Gastrocnemius medialis (tissue), 4 donors: ENCODE measurements at regions of chr6 and their contacts with region 1.

Region 1: DNA sequence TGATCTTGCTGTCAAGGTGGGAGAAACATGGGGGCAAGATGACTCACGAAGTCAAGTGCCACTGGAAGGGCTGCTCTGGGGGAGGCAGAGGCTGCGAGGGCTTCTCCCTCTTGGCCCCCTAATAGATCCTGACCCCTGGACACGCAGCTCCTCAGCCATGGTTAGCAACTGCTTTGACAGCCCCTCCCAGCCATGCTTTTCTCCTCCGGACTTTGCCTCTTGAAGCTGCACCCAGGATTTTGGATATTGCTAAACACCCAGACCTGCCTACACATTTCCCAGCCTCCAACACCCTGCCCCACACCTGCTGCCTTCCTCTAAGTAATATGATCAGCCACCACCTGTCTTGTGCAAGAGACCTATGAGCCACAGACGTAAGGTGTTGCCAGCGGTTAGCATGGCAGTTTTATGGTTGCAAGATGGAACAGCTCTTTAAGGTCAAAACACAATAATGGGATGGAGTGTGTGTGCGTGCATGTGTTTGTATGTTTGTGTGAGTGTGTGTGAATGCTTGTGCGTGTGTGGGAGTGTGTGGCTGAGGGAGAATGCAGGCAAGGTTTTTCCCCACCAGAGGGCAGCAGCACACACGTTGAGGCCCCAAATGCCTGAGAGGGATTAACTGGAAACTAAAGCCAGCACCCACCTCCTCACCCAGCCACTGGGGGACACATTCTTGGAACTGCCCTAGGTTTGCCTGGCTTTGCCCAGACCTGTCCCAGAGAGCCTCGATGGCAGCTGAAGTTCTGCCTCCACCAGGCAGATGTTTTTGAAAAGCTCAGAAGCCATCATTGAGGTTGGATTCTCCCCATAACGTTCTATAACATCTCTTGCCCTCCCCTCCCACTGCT is 2.5 kb downstream of the IP6K3 start:
- DNase-seq: peak; percentile 89 to 96
- ATAC-seq: peak; percentile 28 to 35
- H3K4me3 ChIP-seq: peak overlapping the region; percentile 66 to 88 (median 79)
- H3K27ac ChIP-seq: peak overlapping the region; percentile 98 to 100 (median 100)
- H3K4me1 ChIP-seq: peaks cover 15 to 32% of the 10 kb centered on the region in 2 donors
- H3K27me3 ChIP-seq: no peaks in the 10 kb centered on the region
- CTCF ChIP-seq: peak; percentile 91 to 98 (median 98)
- POLR2A ChIP-seq: peak in 1 of 2 donors; percentile 78

Region 2: GRCh38 chr6:31815025-31815838 is 1929.0 kb before region 1 on chr6 and contains the starts of genes HSPA1A and HSPA1L:
- in situ Hi-C with region 1: no loop called
- intact Hi-C with region 1: loop called (anchors 5 kb)
- DNase-seq: peak; percentile 95 to 97
- ATAC-seq: peak; percentile 61 to 62
- H3K4me3 ChIP-seq: peak within 1 kb of the TSS; percentile 52 to 78 (median 70)
- H3K27ac ChIP-seq: peak within 1 kb of the TSS; percentile 99 to 100 (median 99)
- H3K4me1 ChIP-seq: peaks cover 32 to 35% of the 10 kb centered on the region in 2 donors
- H3K27me3 ChIP-seq: no peaks in the 10 kb centered on the region
- CTCF ChIP-seq: no peak
- POLR2A ChIP-seq: peak; percentile 100
- total RNA-seq, gene HSPA1A: 85.8 to 205 (median 111) TPM
- total RNA-seq, gene HSPA1L: 1.1 to 7.1 (median 3.5) TPM

Region 3: DNA sequence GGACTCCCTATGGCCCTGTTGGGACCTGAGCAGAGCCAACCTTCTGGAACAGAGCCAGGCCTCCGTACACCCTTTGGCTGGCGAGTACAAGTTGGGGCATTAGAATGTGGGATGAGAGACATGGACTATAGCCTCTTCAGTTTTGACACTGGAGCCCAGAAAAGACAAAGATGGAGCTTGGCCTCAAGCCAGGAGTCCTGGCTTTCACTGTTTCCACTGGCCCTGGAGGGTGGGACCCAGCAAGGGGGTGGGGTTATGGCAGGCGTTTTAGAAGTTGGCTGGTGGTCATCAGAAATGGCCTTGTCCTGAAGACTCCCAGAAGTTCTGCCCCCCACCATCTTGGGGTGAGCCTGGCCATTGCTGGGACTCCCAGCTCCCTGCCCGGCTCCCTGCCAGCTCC is 101.3 kb before region 1 on chr6:
- in situ Hi-C with region 1: no loop called
- intact Hi-C with region 1: no loop called
- DNase-seq: no peak
- ATAC-seq: no peak
- H3K4me3 ChIP-seq: no peak overlapping the region
- H3K27ac ChIP-seq: no peak overlapping the region
- H3K4me1 ChIP-seq: no peaks in the 10 kb centered on the region
- H3K27me3 ChIP-seq: no peaks in the 10 kb centered on the region
- CTCF ChIP-seq: no peak
- POLR2A ChIP-seq: no peak

Region 4: DNA sequence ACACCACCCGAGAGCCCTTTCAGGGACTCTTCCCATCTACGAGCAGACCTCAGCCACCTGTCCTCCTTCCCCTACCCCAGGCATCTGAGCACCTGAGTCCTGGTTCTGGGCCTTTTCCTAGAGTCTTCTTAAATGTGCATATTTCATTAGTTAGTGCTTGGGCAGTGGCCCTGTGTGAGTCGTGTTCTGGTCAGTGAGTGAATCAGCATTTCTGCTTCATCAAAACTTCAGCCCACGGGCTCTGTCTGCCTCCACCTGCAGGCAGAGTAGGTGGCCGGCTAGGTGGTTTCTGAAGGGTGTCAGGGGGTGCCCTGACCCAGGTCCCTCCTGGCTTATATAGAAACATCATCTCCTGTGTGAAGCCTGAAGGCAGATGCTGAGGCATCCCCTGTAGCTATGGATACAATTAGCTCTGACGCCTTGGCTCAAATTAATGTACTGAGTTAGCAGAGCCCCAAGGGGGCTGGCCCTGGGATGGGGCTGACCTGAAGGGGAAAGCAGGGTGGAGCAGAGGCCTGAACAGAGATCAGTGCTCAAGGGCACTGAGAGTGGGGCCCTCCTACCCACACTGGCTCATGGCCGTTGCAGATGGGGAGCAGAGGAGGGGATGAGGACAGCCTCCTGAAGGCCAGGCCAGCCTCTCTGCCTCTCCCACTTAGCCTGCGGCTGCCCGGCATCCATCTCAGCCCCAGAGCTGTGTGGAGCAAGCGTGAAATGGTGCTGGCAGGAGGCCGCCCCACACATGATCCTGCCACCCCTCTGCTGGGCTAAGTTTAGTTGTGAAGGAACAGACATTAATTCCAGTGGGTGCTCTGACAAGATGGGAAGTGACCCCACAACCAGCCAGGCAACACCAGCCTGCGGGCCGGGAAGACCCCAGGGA is 11.2 kb before region 1 on chr6:
- in situ Hi-C with region 1: no loop called
- intact Hi-C with region 1: loop called (anchors 1 kb)
- DNase-seq: peak in 1 of 2 donors; percentile 68
- ATAC-seq: no peak
- H3K4me3 ChIP-seq: peak overlapping the region in 1 of 4 donors; percentile 22
- H3K27ac ChIP-seq: peak overlapping the region; percentile 98 to 100 (median 100)
- H3K4me1 ChIP-seq: peaks cover 84 to 89% of the 10 kb centered on the region in 2 donors
- H3K27me3 ChIP-seq: no peaks in the 10 kb centered on the region
- CTCF ChIP-seq: no peak
- POLR2A ChIP-seq: peak in 1 of 2 donors; percentile 9

Region 5: DNA sequence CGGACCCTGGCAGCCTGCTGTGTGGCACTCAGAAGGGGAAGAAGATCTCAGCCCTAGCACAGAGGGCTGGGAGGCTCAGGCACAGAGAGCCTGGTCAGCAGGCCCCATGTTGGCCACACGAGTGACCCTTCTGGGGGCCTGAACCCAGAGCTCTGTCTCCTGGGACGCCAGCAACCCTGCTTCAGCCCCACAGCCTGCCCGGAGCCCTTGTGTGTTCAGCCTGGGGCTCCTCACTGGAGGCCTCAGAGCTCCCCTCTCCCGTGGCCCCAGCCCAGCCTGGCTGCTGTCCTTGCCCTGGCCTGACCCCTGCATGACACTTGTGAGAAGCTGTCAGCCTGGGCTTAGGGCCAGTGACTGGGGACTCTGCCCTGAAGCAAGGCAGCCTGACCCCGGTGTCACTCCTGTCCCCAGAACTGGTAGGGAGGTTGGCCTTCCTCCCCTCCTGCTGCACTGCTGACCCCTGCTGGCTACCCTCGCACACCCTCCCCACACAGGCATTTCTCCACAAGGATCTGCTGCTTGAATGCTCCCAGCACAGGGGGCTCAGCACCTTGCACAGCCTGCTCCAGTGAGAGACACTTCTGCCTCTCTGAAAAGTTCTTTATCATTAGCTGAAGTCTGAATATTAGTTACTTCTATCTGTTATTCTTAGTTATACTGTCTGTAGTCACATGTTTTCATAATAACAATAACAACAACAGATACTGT is 17.9 kb after region 1 on chr6:
- in situ Hi-C with region 1: no loop called
- intact Hi-C with region 1: loop called (anchors 1 kb)
- DNase-seq: peak; percentile 84 to 98
- ATAC-seq: peak; percentile 91 to 95
- H3K4me3 ChIP-seq: peak overlapping the region in 3 of 4 donors; percentile 27 to 37 (median 34)
- H3K27ac ChIP-seq: peak overlapping the region; percentile 85 to 93 (median 90)
- H3K4me1 ChIP-seq: peaks cover 24 to 26% of the 10 kb centered on the region in 2 donors
- H3K27me3 ChIP-seq: no peaks in the 10 kb centered on the region
- CTCF ChIP-seq: peak; percentile 73 to 85 (median 85)
- POLR2A ChIP-seq: peak; percentile 31 to 46

Region 6: DNA sequence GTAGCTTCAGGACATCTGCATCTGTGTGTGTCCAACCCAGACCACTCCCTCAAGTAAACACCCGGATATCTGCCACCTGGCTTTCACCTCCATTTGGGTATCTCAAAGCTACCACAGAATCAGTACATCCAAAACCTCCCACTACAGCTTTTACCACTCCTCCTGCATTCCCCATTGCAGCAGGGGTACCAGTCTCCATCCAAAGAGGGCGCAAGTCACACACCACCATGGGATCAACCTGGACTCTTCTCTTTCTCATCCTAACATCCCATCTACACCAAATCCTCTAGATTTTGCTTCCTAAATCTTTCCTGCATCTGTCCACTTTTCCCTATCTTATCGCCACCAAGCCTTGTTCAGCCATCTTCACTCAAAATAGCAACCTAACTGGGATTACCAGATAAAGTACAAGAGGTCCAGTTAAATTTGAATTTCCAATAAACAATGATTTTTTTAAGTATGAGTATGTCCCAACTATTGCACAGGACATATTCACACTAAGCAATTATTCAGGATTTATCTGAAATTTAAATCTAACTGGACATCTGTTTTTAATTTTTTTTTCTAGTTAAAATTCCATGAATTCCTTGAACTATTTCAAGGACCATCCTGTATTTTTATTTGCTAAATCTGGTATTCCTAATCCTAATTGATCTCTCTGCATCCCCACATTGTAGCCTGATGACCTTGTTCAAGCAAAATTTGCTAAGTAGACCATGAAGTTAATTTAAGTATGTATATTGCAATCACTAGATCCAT is 223.9 kb after region 1 on chr6:
- in situ Hi-C with region 1: no loop called
- intact Hi-C with region 1: no loop called
- DNase-seq: no peak
- ATAC-seq: no peak
- H3K4me3 ChIP-seq: no peak overlapping the region
- H3K27ac ChIP-seq: no peak overlapping the region
- H3K4me1 ChIP-seq: no peaks in the 10 kb centered on the region
- H3K27me3 ChIP-seq: peaks cover 14 to 38% (median 34%) of the 10 kb centered on the region in 3 donors
- CTCF ChIP-seq: no peak
- POLR2A ChIP-seq: no peak

Region 7: DNA sequence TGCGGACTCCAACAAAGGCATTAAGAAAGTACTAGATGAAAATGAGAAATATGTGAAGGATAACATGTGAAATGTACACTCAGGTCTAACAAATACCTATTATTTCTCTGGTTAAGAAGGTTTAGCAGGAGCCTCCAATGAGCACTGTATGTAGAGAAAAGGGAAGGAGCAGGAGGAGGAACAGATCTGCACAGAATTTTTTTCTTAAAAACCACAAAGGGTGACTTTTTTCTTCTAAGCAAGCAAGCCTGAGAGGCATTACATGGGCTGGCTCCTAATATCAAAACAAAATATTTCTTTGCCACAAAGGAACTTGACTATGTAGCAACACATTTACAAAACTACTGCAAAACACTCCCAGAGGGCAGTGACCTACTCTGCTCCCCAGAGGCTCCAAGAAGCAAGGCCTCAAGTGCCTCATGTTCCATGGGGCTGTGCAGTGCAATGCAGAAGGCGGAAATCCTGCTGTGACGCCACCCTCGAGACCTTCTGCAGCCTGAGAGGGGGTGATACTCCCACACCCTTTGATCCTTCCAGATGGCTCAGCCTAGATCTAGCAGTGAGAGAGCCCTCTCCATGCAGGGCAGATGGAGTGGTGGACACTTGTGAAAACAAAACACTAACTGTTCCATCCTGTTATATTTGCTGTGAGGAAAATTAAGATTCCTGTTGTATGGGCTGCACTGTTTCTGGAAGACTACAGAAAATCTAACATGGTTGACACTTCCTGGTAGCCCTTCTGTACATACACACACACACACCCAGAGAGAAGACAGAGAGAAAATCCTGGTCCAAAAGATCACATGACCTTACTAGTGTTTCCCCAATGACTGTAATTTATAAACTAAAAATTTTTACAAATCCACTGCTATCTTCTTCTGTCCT is 540.6 kb after region 1 on chr6:
- in situ Hi-C with region 1: loop called in 1 of 4 experiments (anchors 25 kb)
- intact Hi-C with region 1: no loop called
- DNase-seq: peak; percentile 41 to 58
- ATAC-seq: peak; percentile 20 to 32
- H3K4me3 ChIP-seq: no peak overlapping the region
- H3K27ac ChIP-seq: peak overlapping the region; percentile 15 to 60 (median 40)
- H3K4me1 ChIP-seq: peaks cover 29 to 73% of the 10 kb centered on the region in 2 donors
- H3K27me3 ChIP-seq: no peaks in the 10 kb centered on the region
- CTCF ChIP-seq: no peak
- POLR2A ChIP-seq: no peak

Region 8: GRCh38 chr6:35359751-35360348 is 1615.6 kb after region 1 on chr6:
- in situ Hi-C with region 1: no loop called
- intact Hi-C with region 1: loop called (anchors 10 kb)
- DNase-seq: peak in 1 of 2 donors; percentile 59
- ATAC-seq: peak; percentile 4 to 6
- H3K4me3 ChIP-seq: no peak overlapping the region
- H3K27ac ChIP-seq: peak overlapping the region; percentile 85 to 93 (median 86)
- H3K4me1 ChIP-seq: peaks cover 81 to 84% of the 10 kb centered on the region in 2 donors
- H3K27me3 ChIP-seq: no peaks in the 10 kb centered on the region
- CTCF ChIP-seq: no peak
- POLR2A ChIP-seq: no peak